ENCODE measurements at regions of chr7 and their contacts with region 1.

Region 1: GRCh38 chr7:106285051-106285854 is 470 bp upstream of the NAMPT start:
- DNase-seq: peak; percentile 91
- H3K4me3 ChIP-seq: peak overlapping the region; percentile 70 to 88 (median 87)
- H3K27ac ChIP-seq: peak overlapping the region; percentile 94 to 99 (median 99)
- H3K4me1 ChIP-seq: peaks cover 0 to 59% (median 0%) of the 10 kb centered on the region in 3 donors
- H3K27me3 ChIP-seq: no peaks in the 10 kb centered on the region
- CTCF ChIP-seq: no peak
- POLR2A ChIP-seq: peak in 3 of 4 donors; percentile 21 to 66 (median 61)

Region 2: GRCh38 chr7:106425017-106425719 is 139.9 kb after region 1 on chr7:
- intact Hi-C with region 1: loop called (anchors 10 kb)
- DNase-seq: peak; percentile 17
- H3K4me3 ChIP-seq: peak overlapping the region in 1 of 4 donors; percentile 7
- H3K27ac ChIP-seq: peak overlapping the region; percentile 76 to 93 (median 84)
- H3K4me1 ChIP-seq: peaks cover 18 to 72% (median 42%) of the 10 kb centered on the region in 3 donors
- H3K27me3 ChIP-seq: no peaks in the 10 kb centered on the region
- CTCF ChIP-seq: peak in 1 of 6 experiments; percentile 1
- POLR2A ChIP-seq: peak in 1 of 4 donors; percentile 31

Region 3: DNA sequence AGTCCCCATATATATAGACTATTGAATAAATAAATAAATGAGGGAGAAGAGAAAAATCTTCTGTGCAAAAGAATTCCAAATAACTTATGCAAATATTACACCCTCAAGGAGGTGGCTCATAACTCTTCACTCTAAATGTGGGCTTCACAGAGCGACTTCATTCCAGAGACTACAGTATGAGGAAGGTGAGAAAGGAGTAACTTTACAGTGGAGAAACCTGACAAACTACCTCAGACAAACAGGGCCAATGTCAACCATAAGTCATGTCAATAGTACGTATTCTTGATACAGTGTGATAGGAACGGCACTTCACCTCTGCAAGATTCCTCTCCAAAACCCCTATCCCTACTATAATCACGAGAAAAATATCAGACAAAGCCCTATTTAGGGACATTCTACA is 157.9 kb after region 1 on chr7:
- intact Hi-C with region 1: loop called (anchors 5 kb)
- DNase-seq: no peak
- H3K4me3 ChIP-seq: no peak overlapping the region
- H3K27ac ChIP-seq: no peak overlapping the region
- H3K4me1 ChIP-seq: peaks cover 0 to 9% (median 0%) of the 10 kb centered on the region in 3 donors
- H3K27me3 ChIP-seq: no peaks in the 10 kb centered on the region
- CTCF ChIP-seq: no peak
- POLR2A ChIP-seq: no peak

Region 4: GRCh38 chr7:106456339-106456738 is 171.1 kb after region 1 on chr7:
- intact Hi-C with region 1: no loop called
- DNase-seq: no peak
- H3K4me3 ChIP-seq: no peak overlapping the region
- H3K27ac ChIP-seq: no peak overlapping the region
- H3K4me1 ChIP-seq: peaks cover 0 to 16% (median 0%) of the 10 kb centered on the region in 3 donors
- H3K27me3 ChIP-seq: no peaks in the 10 kb centered on the region
- CTCF ChIP-seq: no peak
- POLR2A ChIP-seq: no peak

Measured in esophagus squamous epithelium (tissue), 5 donors.